IMR-90 (cell line): ENCODE measurements at regions of chr17 and their contacts with region 1.

Region 1: GRCh38 chr17:79231766-79232287 is 157.2 kb downstream of the ENGASE start:
- DNase-seq: no peak
- ATAC-seq: no peak
- H3K4me3 ChIP-seq: no peak overlapping the region
- H3K27ac ChIP-seq: no peak overlapping the region
- H3K4me1 ChIP-seq: no peaks in the 10 kb centered on the region
- H3K27me3 ChIP-seq: no peaks in the 10 kb centered on the region; the same call in 1 of the 2 replicates
- CTCF ChIP-seq: no peak
- POLR2A ChIP-seq: no peak
- RAD21 ChIP-seq: no peak

Region 2: GRCh38 chr17:79276821-79277220 is 45.0 kb after region 1 on chr17:
- CTCF ChIA-PET with region 1: no interaction called
- POLR2A ChIA-PET with region 1: no interaction called
- dilution Hi-C with region 1: no loop called
- in situ Hi-C with region 1: no loop called
- intact Hi-C with region 1: no loop called
- DNase-seq: no peak
- ATAC-seq: no peak
- H3K4me3 ChIP-seq: no peak overlapping the region
- H3K27ac ChIP-seq: no peak overlapping the region
- H3K4me1 ChIP-seq: no peaks in the 10 kb centered on the region
- H3K27me3 ChIP-seq: no peaks in the 10 kb centered on the region; the same call in 1 of the 2 replicates
- CTCF ChIP-seq: no peak
- POLR2A ChIP-seq: no peak
- RAD21 ChIP-seq: no peak

Region 3: DNA sequence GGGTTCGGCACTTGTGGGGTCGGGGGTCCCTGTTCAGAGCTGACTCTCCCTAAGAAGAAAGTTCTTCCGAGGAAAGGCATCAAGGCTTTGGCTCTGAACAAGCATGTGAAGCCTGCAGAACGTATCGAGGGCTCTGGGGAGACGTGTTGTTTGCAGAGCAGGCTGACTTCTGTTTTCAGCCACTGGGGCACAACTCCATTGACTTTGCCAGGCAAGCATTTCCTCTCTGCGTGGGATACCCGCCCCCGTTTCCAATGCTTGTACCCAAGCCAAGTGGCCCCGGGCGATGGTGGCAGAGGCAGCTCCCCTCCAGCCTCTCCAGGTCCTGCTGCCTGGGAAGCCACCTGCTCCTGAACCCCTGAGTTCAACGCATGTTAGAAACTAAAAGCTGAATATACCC is 123.3 kb after region 1 on chr17:
- CTCF ChIA-PET with region 1: no interaction called
- POLR2A ChIA-PET with region 1: no interaction called
- dilution Hi-C with region 1: no loop called
- in situ Hi-C with region 1: no loop called
- intact Hi-C with region 1: loop called (anchors 5 kb)
- DNase-seq: no peak
- ATAC-seq: no peak
- H3K4me3 ChIP-seq: no peak overlapping the region
- H3K27ac ChIP-seq: no peak overlapping the region
- H3K4me1 ChIP-seq: no peaks in the 10 kb centered on the region
- H3K27me3 ChIP-seq: peaks cover 11% of the 10 kb centered on the region
- CTCF ChIP-seq: no peak
- POLR2A ChIP-seq: no peak
- RAD21 ChIP-seq: no peak